ENCODE measurements at regions of chr19 and their contacts with region 1.

Region 1: GRCh38 chr19:58558623-58559274 is 338 bp upstream of the UBE2M start:
- DNase-seq: peak; percentile 100
- H3K4me3 Mint-ChIP-seq: peak overlapping the region; percentile 99
- H3K27ac Mint-ChIP-seq: peak overlapping the region; percentile 100
- H3K4me1 Mint-ChIP-seq: peaks cover 58% of the 10 kb centered on the region
- H3K27me3 Mint-ChIP-seq: no peaks in the 10 kb centered on the region

Region 2: DNA sequence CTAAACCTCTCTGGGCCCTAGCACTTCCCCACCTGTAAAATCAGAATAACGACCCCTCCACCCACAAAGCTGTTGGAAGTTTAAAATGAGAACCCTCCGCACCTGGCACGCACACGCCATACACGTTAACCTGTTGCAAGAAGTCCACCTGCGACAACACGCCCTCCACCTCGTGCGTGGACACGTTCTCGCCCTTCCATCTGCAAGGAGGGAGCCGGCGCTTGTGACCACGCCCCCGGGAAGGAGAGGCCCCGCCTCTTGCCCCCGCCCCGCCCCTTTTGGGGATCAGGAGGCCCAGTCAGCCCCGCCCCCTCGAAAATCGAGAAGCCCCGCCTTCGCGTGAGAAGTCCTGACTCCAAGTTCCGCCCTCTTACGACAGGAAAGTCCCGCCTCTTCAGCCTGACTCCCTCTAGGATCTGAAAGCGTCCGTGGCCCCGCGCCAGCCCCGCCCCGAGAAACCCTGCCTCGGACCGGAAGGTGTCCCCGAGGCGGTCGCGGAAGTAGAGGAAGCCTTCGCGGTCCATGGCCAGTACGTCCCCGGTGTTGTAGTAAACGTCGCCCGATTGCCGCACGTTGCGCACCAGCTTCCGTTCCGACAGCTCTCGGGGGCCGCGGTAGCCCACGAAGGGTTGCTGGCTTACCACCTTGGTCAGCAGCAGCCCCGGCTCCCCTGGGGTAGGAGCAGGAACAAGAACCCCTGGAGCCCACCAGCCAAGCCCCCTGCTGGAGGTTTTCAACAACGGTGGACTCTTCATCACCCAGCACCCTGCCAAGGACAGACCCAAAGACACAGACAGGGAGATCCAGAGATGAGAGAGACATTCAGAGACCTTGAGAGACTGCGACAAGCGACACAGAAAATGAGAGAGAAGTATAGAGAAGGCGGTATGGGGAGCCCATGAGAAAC is 59.5 kb before region 1 on chr19:
- CTCF ChIA-PET with region 1: no interaction called
- POLR2A ChIA-PET with region 1: no interaction called
- intact Hi-C with region 1: loop called (anchors 1 kb)
- DNase-seq: peak; percentile 100
- H3K4me3 Mint-ChIP-seq: peak overlapping the region; percentile 89
- H3K27ac Mint-ChIP-seq: peak overlapping the region; percentile 80
- H3K4me1 Mint-ChIP-seq: peaks cover 27% of the 10 kb centered on the region
- H3K27me3 Mint-ChIP-seq: no peaks in the 10 kb centered on the region

Region 3: DNA sequence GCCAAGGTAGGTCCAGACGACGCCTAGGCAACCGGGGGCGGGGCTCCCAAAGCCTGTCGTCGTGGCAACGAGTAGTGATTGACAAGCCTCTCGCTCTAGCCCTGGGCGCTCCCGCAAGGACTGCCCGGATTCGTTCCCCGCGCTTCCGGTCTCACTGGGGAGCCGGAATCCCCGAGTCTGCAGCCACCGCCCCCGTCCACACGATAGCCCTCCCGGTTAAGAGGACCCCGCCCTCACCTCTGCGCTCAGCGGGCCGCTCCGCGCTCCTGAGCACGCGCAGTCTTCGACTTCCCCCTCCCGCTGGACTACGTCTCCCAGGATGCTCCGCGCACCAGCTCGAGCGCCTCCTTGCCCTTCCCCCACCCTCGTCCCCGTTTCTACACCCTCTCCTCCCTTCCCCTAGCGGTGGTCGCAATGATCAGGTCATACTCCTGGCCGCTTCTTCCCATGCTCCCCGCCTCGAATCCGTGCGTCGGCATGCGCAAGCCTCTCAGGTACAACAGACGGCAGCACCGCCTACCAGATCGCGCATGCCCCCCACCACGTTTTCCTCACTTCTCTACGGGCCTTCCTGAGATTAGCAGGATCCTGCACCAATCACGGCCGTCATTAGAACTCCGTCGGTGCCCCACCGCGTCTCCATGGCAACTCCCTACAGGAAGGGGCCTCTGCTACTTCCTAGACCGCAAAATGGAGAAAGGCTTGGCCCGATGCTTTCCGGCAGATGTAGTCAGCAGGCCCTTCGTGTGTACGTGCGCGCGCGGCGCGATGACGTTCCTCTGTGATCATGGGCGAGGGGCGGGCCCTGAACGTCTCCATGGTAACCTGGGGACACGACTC is 14.3 kb after region 1 on chr19 and contains the start of gene MZF1:
- CTCF ChIA-PET with region 1: interaction called, 7 read pairs
- POLR2A ChIA-PET with region 1: interaction called, 16 read pairs
- intact Hi-C with region 1: loop called (anchors 1 kb)
- DNase-seq: peak; percentile 100
- H3K4me3 Mint-ChIP-seq: peak within 1 kb of the TSS; percentile 96
- H3K27ac Mint-ChIP-seq: peak within 1 kb of the TSS; percentile 100
- H3K4me1 Mint-ChIP-seq: peaks cover 33% of the 10 kb centered on the region
- H3K27me3 Mint-ChIP-seq: no peaks in the 10 kb centered on the region
- total RNA-seq, gene MZF1: 13.3 to 14.4 TPM